GM10248 (cell line): ENCODE measurements at regions of chr15 and their contacts with region 1.

Region 1: DNA sequence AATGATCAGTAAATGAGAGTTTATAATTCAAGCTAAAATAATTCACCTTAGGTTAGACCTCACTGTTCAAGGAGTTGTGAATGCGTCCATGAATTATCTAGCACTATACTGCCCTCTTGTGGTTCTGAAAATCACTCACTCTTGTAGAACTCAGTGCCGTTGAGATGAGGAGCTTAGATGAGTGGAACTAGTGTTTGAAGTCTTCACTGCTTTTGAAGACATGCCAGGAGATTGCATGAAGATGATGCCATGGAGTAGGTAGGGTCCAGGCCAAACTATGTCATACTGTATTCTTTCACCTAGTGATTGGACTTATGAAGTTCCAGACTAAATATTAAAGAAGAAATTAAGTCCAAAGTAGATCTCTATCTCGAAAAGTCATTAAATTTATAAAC is 28.8 kb downstream of the LYSMD4 start:
- DNase-seq: peak; percentile 56
- CTCF ChIP-seq: peak; percentile 60

Region 2: DNA sequence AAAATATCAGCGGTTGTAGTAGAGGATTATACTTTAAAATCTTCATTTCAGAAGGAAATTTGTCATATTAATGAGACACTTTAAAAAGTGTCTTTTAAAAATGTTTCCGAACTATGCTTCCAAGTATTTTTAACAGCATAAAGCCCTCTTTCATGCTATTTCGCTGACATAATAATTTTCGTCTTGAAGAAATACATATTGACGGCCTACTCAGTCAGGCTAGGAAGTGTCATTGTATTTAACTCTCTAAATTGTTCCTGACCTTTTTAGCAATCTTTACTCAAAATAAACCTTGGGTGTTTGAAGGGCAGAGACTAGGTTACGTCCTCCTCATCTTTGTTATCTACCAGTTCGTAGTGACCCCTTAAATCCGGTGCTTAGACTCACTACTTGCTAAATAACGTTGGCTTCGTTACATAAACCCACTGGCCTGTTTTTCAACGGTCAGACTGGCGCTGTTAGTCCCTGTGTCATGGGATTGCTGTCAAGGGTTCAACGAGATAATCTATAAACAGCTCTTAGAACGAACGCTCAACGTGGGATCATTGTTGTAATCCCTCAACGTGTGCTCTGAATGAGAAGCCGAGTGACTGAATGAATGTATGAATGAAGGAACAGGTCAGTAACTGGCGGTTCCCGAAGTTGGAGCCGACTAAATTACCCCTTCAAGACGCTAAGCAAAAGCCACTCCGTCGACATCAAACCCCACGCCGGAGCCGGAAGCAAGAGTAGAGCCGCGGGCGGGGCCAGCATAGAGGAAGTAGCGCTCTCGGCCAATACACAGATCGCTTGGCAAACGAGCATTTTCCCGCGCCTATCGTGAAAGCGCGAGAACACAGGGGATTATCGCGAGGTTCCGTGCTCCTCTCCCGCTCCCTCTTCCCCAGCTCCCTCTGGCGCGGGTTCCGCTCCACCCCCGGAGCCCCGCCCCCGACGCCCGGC is 453.7 kb before region 1 on chr15:
- CTCF ChIA-PET with region 1: interaction called, 12 read pairs
- POLR2A ChIA-PET with region 1: no interaction called
- DNase-seq: peak; percentile 96
- CTCF ChIP-seq: no peak

Region 3: DNA sequence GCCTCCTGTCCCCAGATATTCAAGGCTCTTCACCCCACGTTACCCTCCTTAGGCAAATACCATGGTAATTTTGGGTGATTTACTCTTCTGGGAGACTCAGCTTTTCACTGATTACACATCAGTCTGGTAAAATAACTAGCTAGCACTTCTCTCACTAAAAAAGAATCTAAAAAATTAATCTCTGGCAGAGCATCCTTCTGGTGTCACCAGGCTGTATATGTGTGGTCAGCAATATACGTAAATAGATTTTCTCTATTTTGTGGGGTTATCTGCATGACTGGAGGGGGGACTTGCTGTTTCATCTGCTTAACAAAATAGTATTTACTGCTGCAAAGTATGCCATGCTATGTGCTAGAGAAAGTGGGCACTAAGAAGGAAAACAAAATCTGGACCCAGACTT is 408.1 kb before region 1 on chr15:
- CTCF ChIA-PET with region 1: interaction called, 13 read pairs
- POLR2A ChIA-PET with region 1: no interaction called
- DNase-seq: no peak
- CTCF ChIP-seq: no peak

Region 4: DNA sequence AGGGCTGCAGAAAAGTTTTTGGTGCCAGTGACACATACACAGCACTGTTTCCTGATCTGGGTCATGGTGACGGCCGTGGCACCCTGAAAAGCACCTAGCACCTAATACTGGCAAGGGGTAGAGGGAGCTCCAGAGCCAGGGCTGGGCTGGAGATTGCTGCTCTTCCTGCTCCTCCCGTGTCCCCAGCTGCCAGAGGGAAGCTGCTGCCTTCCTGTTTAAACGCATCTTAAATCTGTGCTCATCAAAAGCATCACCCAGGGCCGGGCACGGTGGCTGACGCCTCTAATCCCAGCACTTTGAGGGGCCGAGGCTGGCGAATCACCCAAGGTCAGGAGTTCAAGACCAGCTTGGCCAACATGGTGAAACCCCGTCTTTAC is 295.4 kb before region 1 on chr15:
- CTCF ChIA-PET with region 1: interaction called, 16 read pairs
- POLR2A ChIA-PET with region 1: no interaction called
- DNase-seq: peak; percentile 65
- CTCF ChIP-seq: peak; percentile 36

Region 5: GRCh38 chr15:99466701-99467337 is 237.6 kb before region 1 on chr15:
- CTCF ChIA-PET with region 1: no interaction called
- POLR2A ChIA-PET with region 1: no interaction called
- DNase-seq: no peak
- CTCF ChIP-seq: no peak

Region 6: GRCh38 chr15:99565299-99566156 is 138.9 kb before region 1 on chr15 and contains the start of gene MEF2A:
- CTCF ChIA-PET with region 1: interaction called, 24 read pairs
- POLR2A ChIA-PET with region 1: no interaction called
- DNase-seq: peak; percentile 92
- CTCF ChIP-seq: no peak

Region 7: GRCh38 chr15:99631255-99631654 is 73.2 kb before region 1 on chr15:
- CTCF ChIA-PET with region 1: no interaction called
- POLR2A ChIA-PET with region 1: no interaction called
- DNase-seq: peak; percentile 53
- CTCF ChIP-seq: no peak

Region 8: GRCh38 chr15:99692825-99693224 is 11.6 kb before region 1 on chr15:
- CTCF ChIA-PET with region 1: interaction called, 23 read pairs
- POLR2A ChIA-PET with region 1: no interaction called
- DNase-seq: no peak
- CTCF ChIP-seq: no peak

Region 9: GRCh38 chr15:99755692-99756409 is 51.4 kb after region 1 on chr15:
- CTCF ChIA-PET with region 1: interaction called, 23 read pairs
- POLR2A ChIA-PET with region 1: no interaction called
- DNase-seq: peak; percentile 77
- CTCF ChIP-seq: peak; percentile 68